ENCODE measurements at regions of chr11 and their contacts with region 1.

Region 1: GRCh38 chr11:124673333-124674167 is at the starts of genes SIAE and SPA17:
- DNase-seq: peak; percentile 91
- H3K4me3 Mint-ChIP-seq: peak within 1 kb of the TSS; percentile 84
- H3K27ac Mint-ChIP-seq: peak within 1 kb of the TSS; percentile 79
- H3K4me1 Mint-ChIP-seq: peaks cover 44% of the 10 kb centered on the region
- H3K27me3 Mint-ChIP-seq: peaks cover 3% of the 10 kb centered on the region
- total RNA-seq, gene SIAE: 5.1 to 8.2 TPM
- total RNA-seq, gene SPA17: 3.4 to 3.8 TPM

Region 2: DNA sequence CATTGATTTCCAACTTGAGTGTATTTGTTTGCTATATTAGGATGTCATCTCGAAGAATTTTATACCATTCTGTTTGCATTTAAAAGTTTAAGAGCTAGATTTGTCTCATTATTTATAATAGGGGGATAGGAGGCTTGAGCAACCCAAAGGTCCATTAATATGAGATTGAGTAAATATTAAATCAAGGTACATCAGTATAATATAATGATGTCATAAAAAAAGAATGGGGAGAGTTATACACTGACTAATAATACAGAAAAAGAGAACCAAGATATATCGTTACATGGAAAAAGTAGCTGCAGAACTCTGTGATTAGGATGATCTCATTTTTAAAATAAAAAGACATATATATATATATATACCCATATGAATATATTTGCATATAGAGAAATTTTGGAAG is 19.6 kb after region 1 on chr11:
- CTCF ChIA-PET with region 1: no interaction called
- POLR2A ChIA-PET with region 1: no interaction called
- DNase-seq: no peak
- H3K4me3 Mint-ChIP-seq: no peak overlapping the region
- H3K27ac Mint-ChIP-seq: no peak overlapping the region
- H3K4me1 Mint-ChIP-seq: no peaks in the 10 kb centered on the region
- H3K27me3 Mint-ChIP-seq: peaks cover 14% of the 10 kb centered on the region

Region 3: DNA sequence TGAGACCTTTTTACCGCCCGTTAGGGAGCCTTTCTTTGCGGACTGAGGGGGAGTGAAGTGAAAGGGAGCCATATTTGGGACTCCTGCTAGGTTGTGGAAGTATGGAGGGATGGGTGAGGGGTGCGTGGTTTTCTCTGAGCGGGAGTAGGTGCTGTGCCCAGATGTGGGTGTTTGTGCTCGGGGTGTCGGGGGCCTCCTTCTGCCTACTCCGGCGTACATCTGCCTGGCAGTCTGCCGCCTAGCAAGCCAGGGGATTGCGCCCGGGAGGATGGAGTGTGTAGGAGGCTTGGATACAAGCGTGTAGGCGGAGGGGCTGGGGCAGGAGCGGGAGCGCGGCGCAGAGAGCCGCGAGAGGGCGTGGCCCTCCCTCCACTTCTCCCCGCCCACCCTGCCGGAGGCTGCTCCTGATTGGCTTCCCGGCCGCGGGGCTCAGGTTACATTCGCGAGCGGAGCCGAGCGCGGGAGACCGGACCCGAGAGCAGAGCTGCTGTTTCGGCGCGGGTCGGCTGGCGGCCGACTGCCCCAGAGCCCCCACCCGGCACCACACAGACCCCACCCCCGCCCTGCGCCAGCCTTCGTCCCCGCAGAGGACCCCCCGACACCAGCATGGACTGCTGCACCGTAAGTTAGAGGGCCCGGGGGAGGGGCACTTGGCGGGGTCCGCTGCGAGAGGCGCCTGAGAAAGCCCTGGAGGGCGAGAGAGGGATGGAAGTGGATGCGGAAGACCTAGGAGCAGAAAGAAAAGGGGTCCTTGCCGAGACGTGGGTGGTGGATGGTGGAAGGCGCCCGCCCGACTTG is 66.1 kb after region 1 on chr11 and contains the start of gene NRGN:
- CTCF ChIA-PET with region 1: interaction called, 14 read pairs
- POLR2A ChIA-PET with region 1: interaction called, 11 read pairs
- DNase-seq: peak; percentile 86
- H3K4me3 Mint-ChIP-seq: peak within 1 kb of the TSS; percentile 77
- H3K27ac Mint-ChIP-seq: no peak within 1 kb of the TSS
- H3K4me1 Mint-ChIP-seq: peaks cover 14% of the 10 kb centered on the region
- H3K27me3 Mint-ChIP-seq: peaks cover 35% of the 10 kb centered on the region
- total RNA-seq, gene NRGN: 7.3 to 8.4 TPM

Region 4: GRCh38 chr11:124753205-124753604 is 79.7 kb after region 1 on chr11:
- CTCF ChIA-PET with region 1: interaction called, 11 read pairs
- POLR2A ChIA-PET with region 1: no interaction called
- DNase-seq: no peak
- H3K4me3 Mint-ChIP-seq: no peak overlapping the region
- H3K27ac Mint-ChIP-seq: no peak overlapping the region
- H3K4me1 Mint-ChIP-seq: peaks cover 27% of the 10 kb centered on the region
- H3K27me3 Mint-ChIP-seq: peaks cover 26% of the 10 kb centered on the region

Region 5: GRCh38 chr11:124793466-124794278 is 120.1 kb after region 1 on chr11:
- CTCF ChIA-PET with region 1: interaction called, 32 read pairs
- POLR2A ChIA-PET with region 1: interaction called, 14 read pairs
- DNase-seq: no peak
- H3K4me3 Mint-ChIP-seq: no peak overlapping the region
- H3K27ac Mint-ChIP-seq: no peak overlapping the region
- H3K4me1 Mint-ChIP-seq: peaks cover 41% of the 10 kb centered on the region
- H3K27me3 Mint-ChIP-seq: no peaks in the 10 kb centered on the region

Region 6: DNA sequence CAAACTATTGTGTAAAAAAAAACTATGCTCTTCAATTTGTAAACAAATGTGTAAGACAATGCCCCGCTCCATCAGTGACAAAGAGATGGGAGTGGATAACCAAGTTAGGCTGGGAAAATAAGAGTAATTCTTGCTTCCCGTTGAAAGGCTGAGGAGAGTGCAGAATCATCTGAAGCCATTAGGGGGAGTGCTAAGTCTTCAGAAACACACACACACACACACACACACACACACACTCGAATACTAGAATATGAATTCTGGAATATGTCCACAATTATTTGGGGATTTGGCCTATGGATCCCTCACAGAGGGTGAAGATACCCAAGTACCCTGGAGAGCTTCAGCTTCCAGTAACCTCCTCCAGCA is 163.9 kb after region 1 on chr11:
- CTCF ChIA-PET with region 1: interaction called, 51 read pairs
- POLR2A ChIA-PET with region 1: interaction called, 13 read pairs
- DNase-seq: no peak
- H3K4me3 Mint-ChIP-seq: no peak overlapping the region
- H3K27ac Mint-ChIP-seq: no peak overlapping the region
- H3K4me1 Mint-ChIP-seq: peaks cover 21% of the 10 kb centered on the region
- H3K27me3 Mint-ChIP-seq: peaks cover 60% of the 10 kb centered on the region

Measured in activated CD4-positive, alpha-beta memory T cell treated with anti-CD3 and anti-CD28 coated beads, Interleukin-2, amount 10 ng/mL, durations not matched to agents 7 days and 5 days (primary cell).